ENCODE measurements at regions of chr14 and their contacts with region 1.

Region 1: DNA sequence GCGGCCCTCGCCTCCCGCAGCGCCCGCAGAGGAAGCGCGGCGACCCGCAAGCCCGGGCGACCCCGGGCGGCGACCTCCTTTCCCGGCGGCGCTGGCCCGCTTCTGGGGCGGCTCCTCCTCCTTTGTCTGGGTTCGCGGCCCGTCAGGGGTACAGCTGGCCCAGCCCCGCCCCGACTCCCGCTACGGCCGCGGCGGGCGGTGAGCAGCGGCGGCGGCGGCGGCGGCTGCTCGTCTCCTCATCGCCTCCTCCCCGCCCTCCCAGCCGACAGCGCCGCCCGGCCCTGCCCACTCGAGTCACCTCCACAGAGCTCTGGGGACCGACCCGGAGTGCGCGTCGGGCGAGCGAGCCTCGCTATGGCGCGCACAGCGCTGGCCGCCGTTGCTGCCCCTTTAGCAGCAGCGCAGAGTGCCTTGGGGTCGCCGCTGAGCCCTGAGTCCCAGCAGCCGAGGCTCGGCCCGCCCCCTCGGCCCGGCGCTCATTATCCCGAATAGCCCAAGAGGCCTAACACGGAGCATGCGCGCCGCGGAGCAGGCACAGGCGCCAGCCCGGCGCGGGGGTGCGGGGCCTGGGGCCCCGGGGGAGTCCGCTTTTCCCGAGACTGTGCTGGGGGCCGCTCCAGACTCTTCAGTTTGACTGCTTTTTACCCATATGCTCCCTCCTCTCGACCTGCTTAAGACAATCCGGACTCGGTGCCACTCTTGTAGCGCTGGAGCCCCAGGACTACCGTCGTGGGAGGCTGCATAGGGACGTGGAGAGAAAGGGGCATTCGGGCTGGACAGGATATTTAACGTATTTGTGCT is at the start of gene SOS2:
- DNase-seq: peak; percentile 91
- H3K4me3 ChIP-seq: peak within 1 kb of the TSS; percentile 92 to 99 (median 98)
- H3K27ac ChIP-seq: peak within 1 kb of the TSS; percentile 88
- H3K4me1 ChIP-seq: peaks cover 18% of the 10 kb centered on the region
- H3K27me3 ChIP-seq: no peaks in the 10 kb centered on the region
- CTCF ChIP-seq: no peak
- POLR2A ChIP-seq: peak; percentile 83
- total RNA-seq, gene SOS2: 21.3 and 23.7 TPM in 2 replicates

Region 2: GRCh38 chr14:49620182-49621113 is 611.2 kb before region 1 on chr14 and contains the starts of genes MGAT2 and RPL36AL:
- CTCF ChIA-PET with region 1: no interaction called
- POLR2A ChIA-PET with region 1: no interaction called
- dilution Hi-C with region 1: no loop called
- intact Hi-C with region 1: loop called (anchors 10 kb)
- DNase-seq: peak; percentile 99
- H3K4me3 ChIP-seq: peak within 1 kb of the TSS; percentile 59 to 95 (median 83)
- H3K27ac ChIP-seq: peak within 1 kb of the TSS; percentile 85
- H3K4me1 ChIP-seq: peaks cover 40% of the 10 kb centered on the region
- H3K27me3 ChIP-seq: no peaks in the 10 kb centered on the region
- CTCF ChIP-seq: peak; percentile 8 to 51
- POLR2A ChIP-seq: peak; percentile 94
- total RNA-seq, gene MGAT2: 68.1 and 72.6 TPM in 2 replicates
- total RNA-seq, gene RPL36AL: 251 and 260 TPM in 2 replicates

Region 3: GRCh38 chr14:49862089-49862673 is 369.5 kb before region 1 on chr14:
- CTCF ChIA-PET with region 1: interaction called, 3 read pairs
- POLR2A ChIA-PET with region 1: no interaction called
- dilution Hi-C with region 1: no loop called
- intact Hi-C with region 1: loop called (anchors 2 kb)
- DNase-seq: peak; percentile 93
- H3K4me3 ChIP-seq: peak overlapping the region; percentile 59 to 91 (median 73)
- H3K27ac ChIP-seq: peak overlapping the region; percentile 77
- H3K4me1 ChIP-seq: peaks cover 15% of the 10 kb centered on the region
- H3K27me3 ChIP-seq: no peaks in the 10 kb centered on the region
- CTCF ChIP-seq: peak; percentile 100
- POLR2A ChIP-seq: no peak

Region 4: GRCh38 chr14:50311975-50312733 is 80.5 kb after region 1 on chr14 and contains the starts of genes DMAC2L and L2HGDH:
- CTCF ChIA-PET with region 1: no interaction called
- POLR2A ChIA-PET with region 1: no interaction called
- dilution Hi-C with region 1: no loop called
- intact Hi-C with region 1: loop called (anchors 1 kb)
- DNase-seq: peak; percentile 95
- H3K4me3 ChIP-seq: peak within 1 kb of the TSS; percentile 64 to 83 (median 79)
- H3K27ac ChIP-seq: peak within 1 kb of the TSS; percentile 66
- H3K4me1 ChIP-seq: peaks cover 15% of the 10 kb centered on the region
- H3K27me3 ChIP-seq: no peaks in the 10 kb centered on the region
- CTCF ChIP-seq: peak in 1 of 2 donors; percentile 60
- POLR2A ChIP-seq: peak; percentile 91
- total RNA-seq, gene DMAC2L: 7.9 and 13.9 TPM in 2 replicates
- total RNA-seq, gene L2HGDH: 5.3 and 5.4 TPM in 2 replicates

Region 5: GRCh38 chr14:50559990-50560930 is 328.6 kb after region 1 on chr14 and contains the start of gene ATL1:
- CTCF ChIA-PET with region 1: no interaction called
- POLR2A ChIA-PET with region 1: no interaction called
- dilution Hi-C with region 1: no loop called
- intact Hi-C with region 1: loop called (anchors 1 kb)
- DNase-seq: peak; percentile 59
- H3K4me3 ChIP-seq: peak within 1 kb of the TSS; percentile 59 to 92 (median 90)
- H3K27ac ChIP-seq: no peak within 1 kb of the TSS
- H3K4me1 ChIP-seq: peaks cover 11% of the 10 kb centered on the region
- H3K27me3 ChIP-seq: peaks cover 23% of the 10 kb centered on the region in 2 experiments
- CTCF ChIP-seq: no peak
- POLR2A ChIP-seq: no peak
- total RNA-seq, gene ATL1: 2.8 and 5.1 TPM in 2 replicates

Measured in endothelial cell of umbilical vein (primary cell).